ENCODE measurements at regions of chr14 and their contacts with region 1.

Region 1: DNA sequence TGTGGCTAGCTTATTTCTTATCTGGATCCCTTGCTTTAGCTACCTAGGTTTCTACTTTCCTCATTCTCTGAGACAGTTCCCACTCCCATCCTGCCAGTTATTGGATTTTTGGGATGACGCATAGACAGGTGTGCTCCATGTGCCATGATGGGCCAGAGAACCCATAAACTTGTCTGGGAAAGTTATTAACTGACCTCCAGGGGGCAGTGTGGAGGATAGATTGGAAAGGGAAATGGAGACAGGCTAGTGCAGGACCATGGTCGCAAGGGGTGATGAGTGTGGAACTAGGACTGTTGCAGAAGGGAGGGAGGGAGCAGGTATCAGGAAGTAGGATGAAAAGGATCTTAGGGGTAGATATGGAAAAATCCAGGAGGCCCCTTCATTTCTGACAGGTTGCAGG is 80.3 kb downstream of the ESRRB start:
- DNase-seq: peak; percentile 65
- ATAC-seq: peak; percentile 84
- H3K4me3 Mint-ChIP-seq: no peak overlapping the region
- H3K27ac Mint-ChIP-seq: no peak overlapping the region
- H3K4me1 Mint-ChIP-seq: peaks cover 12% of the 10 kb centered on the region
- H3K27me3 Mint-ChIP-seq: no peaks in the 10 kb centered on the region
- CTCF ChIP-seq: peak; percentile 58

Region 2: DNA sequence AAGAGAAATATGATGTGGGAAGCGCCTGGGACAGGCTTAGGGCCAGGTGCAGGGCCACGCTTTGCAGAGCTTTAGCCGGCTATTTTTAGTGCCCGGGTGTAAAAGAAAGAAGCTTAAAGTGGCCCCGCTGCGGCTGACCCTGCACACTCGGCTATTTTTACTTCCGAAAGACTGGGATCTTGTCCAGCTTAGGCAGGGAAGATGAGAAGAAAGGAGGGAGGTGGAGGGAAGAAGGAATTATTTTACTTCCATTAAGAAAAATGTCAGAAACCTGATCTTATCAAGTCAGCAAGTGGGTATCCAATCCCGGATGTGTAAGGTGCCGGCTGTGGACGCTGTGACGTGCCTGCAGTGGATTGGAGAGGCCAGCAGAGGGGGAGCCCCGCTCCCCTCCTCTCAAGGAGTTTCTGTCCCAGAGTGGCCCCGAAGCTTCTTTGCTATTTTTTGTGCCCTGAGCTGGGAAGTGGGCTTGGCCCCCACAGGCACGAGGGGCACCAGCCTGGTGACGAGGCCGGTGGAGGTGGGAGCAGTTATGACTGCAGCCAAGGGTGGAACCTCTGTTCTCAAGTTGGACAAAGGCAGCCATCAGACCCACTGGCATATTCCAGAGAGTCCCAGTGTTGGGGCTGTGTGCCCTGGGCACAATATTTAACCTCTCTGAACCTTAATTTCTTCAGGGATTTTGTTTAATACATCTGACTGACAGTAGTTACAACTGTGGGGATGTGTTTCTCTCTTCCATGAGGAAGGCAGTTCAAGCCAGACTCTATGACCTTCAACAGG is 17.5 kb after region 1 on chr14:
- CTCF ChIA-PET with region 1: interaction called, 13 read pairs
- POLR2A ChIA-PET with region 1: no interaction called
- DNase-seq: peak; percentile 59
- ATAC-seq: peak; percentile 98
- H3K4me3 Mint-ChIP-seq: no peak overlapping the region
- H3K27ac Mint-ChIP-seq: no peak overlapping the region
- H3K4me1 Mint-ChIP-seq: peaks cover 6% of the 10 kb centered on the region; the same call in 1 of the 2 replicates
- H3K27me3 Mint-ChIP-seq: no peaks in the 10 kb centered on the region; the same call in 1 of the 2 replicates
- CTCF ChIP-seq: no peak

Region 3: DNA sequence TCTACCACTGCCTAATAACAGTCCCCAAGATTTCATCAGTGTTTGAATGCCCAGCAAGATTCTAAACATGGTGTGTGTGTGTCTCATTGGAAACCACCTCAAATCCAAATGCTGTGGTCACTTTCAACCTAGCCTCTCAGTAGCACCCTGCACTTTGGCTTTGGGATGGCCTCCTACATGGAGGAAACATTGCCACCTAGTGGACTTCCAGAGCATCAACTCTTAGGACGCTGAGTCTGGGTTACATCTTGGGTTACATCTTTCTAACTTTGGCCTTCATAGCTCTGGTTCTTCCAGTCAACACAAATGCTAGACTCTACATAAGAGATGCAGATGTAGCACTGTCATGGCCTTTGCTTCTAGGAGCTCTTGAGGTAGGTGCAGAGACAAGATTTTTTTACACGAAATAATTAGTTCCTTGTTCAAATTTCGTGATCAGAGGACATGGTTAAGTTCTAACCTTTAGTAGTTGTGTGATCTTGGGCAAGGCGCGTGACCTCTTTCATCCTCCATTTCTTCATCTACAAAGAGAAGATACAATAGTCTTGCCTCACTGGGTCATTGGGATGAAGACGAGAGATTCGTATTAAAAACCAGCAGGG is 191.6 kb after region 1 on chr14:
- CTCF ChIA-PET with region 1: interaction called, 12 read pairs
- POLR2A ChIA-PET with region 1: no interaction called
- DNase-seq: peak; percentile 32
- ATAC-seq: peak; percentile 73
- H3K4me3 Mint-ChIP-seq: no peak overlapping the region
- H3K27ac Mint-ChIP-seq: no peak overlapping the region
- H3K4me1 Mint-ChIP-seq: peaks cover 13% of the 10 kb centered on the region
- H3K27me3 Mint-ChIP-seq: no peaks in the 10 kb centered on the region
- CTCF ChIP-seq: peak; percentile 69

Measured in WTC11 (cell line).